Caco-2 (cell line): ENCODE measurements at regions of chr13 and their contacts with region 1.

Region 1: DNA sequence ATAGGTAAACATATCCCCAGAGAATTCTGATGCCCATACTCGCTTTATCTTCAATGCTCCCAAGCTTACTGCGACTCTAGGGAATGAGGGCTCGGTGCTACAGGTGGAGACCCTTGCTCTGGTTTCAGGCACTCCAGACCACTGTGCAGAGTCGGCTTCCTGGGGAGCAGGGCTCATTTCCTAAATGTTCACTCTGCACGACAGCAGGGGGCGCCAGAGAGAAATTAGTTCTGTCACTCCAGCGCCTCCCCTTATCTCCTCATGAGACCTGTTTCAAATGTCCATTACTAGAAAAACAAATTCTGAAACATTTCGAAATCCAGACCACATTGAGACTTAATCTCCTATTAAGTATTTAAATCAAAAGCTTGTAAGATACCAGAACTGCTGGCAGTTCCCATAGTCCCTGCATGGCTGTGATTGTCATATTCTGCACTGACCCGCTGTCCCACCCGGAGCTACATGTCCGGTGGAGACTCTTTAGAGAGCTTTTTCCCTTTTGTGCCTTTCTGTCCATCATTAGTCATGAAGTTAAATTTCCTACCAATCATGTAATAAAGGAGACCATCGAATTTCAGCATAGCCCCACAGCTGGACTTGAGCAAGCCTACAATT is 22.4 kb downstream of the EPSTI1 start:
- DNase-seq: peak; percentile 83 to 91
- H3K4me3 ChIP-seq: no peak overlapping the region
- H3K4me3 Mint-ChIP-seq: peak overlapping the region; percentile 4
- H3K27ac Mint-ChIP-seq: peak overlapping the region; percentile 34
- H3K4me1 ChIP-seq: peaks cover 77% of the 10 kb centered on the region
- H3K4me1 Mint-ChIP-seq: peaks cover 49% of the 10 kb centered on the region
- H3K27me3 ChIP-seq: no peaks in the 10 kb centered on the region
- H3K27me3 Mint-ChIP-seq: no peaks in the 10 kb centered on the region
- CTCF ChIP-seq: peak; percentile 82 to 94

Region 2: DNA sequence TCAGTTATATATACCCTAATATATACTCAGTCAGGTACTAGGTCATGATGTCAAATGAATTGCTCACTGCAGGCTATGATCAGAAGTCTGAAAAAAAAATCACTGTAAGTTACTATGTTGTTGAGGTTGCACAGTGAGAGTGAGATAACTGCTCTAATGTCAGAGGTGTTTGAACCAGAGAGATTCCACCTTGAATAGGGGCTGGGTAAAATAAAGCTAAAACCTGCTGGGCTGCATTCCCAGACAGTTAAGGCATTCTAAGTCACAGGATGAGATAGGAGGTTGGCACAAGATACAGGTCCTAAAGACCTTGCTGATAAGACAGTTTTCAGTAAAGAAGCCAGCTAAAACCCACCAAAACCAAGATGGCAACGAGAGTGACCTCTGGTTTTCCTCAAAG is 12.2 kb after region 1 on chr13:
- CTCF ChIA-PET with region 1: interaction called, 4 read pairs
- POLR2A ChIA-PET with region 1: interaction called, 3 read pairs
- intact Hi-C with region 1: loop called (anchors 2 kb)
- DNase-seq: peak; percentile 82
- H3K4me3 ChIP-seq: no peak overlapping the region
- H3K4me3 Mint-ChIP-seq: peak overlapping the region; percentile 34
- H3K27ac Mint-ChIP-seq: peak overlapping the region; percentile 95
- H3K4me1 ChIP-seq: peaks cover 67% of the 10 kb centered on the region
- H3K4me1 Mint-ChIP-seq: peaks cover 72% of the 10 kb centered on the region
- H3K27me3 ChIP-seq: no peaks in the 10 kb centered on the region
- H3K27me3 Mint-ChIP-seq: no peaks in the 10 kb centered on the region
- CTCF ChIP-seq: no peak

Region 3: DNA sequence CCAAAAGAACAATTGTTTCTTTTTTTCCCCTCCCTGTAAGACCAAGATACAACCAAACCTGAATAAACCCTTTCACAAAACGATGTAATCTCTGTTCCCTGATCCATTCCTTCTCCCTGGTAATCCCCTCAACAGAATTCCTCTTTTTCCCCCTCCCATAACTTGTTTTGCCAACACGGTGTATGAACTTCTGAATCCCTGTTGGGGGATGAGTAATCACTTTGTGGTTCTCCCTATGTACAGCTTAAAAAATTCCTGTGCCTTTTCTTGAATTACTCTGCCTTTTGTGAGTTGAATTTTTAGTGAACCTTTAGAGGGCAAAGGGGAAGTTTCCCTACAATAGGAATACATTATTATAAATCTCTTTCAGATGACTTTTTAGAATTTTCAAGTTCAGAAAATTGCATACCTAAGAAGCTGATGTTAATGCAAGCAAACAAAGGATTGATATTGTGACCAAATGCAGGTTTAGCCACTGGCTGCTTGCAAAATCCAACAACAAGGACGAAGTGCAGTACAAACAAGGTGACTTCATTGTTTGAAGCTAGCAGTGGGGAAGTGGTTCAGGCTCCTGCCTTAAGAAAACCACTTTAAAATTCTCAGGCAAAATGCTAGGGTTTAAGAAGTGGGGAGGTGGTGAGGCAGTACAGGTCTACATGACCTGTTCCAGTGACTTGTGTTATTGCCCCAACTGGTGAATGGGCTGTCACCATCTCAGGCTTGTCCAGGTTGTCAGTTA is 37.4 kb after region 1 on chr13:
- CTCF ChIA-PET with region 1: no interaction called
- POLR2A ChIA-PET with region 1: interaction called, 3 read pairs
- intact Hi-C with region 1: loop called (anchors 5 kb)
- DNase-seq: no peak
- H3K4me3 ChIP-seq: no peak overlapping the region
- H3K4me3 Mint-ChIP-seq: peak overlapping the region; percentile 15
- H3K27ac Mint-ChIP-seq: peak overlapping the region; percentile 85
- H3K4me1 ChIP-seq: peaks cover 49% of the 10 kb centered on the region
- H3K4me1 Mint-ChIP-seq: peaks cover 60% of the 10 kb centered on the region
- H3K27me3 ChIP-seq: no peaks in the 10 kb centered on the region
- H3K27me3 Mint-ChIP-seq: no peaks in the 10 kb centered on the region
- CTCF ChIP-seq: no peak

Region 4: DNA sequence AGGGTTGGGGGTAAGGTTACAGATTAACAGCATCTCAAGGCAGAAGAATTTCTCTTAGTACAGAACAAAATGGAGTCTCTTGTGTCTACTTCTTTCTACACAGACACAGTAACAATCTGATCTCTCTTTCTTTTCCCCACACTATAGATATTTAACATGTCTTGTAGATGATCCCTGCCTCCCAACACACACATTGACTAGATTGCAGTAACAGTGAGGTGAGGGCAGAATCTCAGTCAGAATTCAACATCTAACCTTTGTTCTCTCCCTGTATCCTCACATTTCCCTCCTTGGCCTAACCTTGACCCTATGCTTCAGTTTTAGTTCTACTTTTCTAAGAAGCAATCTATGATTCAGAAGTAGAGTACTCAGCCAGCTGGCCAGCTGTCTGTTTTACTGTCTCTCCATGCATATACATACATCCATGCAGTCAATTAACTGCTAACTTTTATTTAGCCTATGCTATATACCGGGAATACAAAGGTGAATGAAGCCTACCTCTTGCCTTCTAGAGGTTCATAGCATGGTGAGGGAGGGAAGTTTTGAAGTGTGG is 71.8 kb after region 1 on chr13:
- CTCF ChIA-PET with region 1: no interaction called
- POLR2A ChIA-PET with region 1: no interaction called
- intact Hi-C with region 1: loop called (anchors 5 kb)
- DNase-seq: no peak
- H3K4me3 ChIP-seq: no peak overlapping the region
- H3K4me3 Mint-ChIP-seq: peak overlapping the region; percentile 68
- H3K27ac Mint-ChIP-seq: peak overlapping the region; percentile 78
- H3K4me1 ChIP-seq: peaks cover 85% of the 10 kb centered on the region
- H3K4me1 Mint-ChIP-seq: peaks cover 74% of the 10 kb centered on the region
- H3K27me3 ChIP-seq: no peaks in the 10 kb centered on the region
- H3K27me3 Mint-ChIP-seq: no peaks in the 10 kb centered on the region
- CTCF ChIP-seq: no peak

Region 5: GRCh38 chr13:43074824-43075510 is 105.3 kb after region 1 on chr13:
- CTCF ChIA-PET with region 1: no interaction called
- POLR2A ChIA-PET with region 1: interaction called, 4 read pairs
- intact Hi-C with region 1: loop called (anchors 5 kb)
- DNase-seq: no peak
- H3K4me3 ChIP-seq: no peak overlapping the region
- H3K4me3 Mint-ChIP-seq: no peak overlapping the region
- H3K27ac Mint-ChIP-seq: no peak overlapping the region
- H3K4me1 ChIP-seq: peaks cover 31% of the 10 kb centered on the region
- H3K4me1 Mint-ChIP-seq: peaks cover 43% of the 10 kb centered on the region
- H3K27me3 ChIP-seq: no peaks in the 10 kb centered on the region
- H3K27me3 Mint-ChIP-seq: no peaks in the 10 kb centered on the region
- CTCF ChIP-seq: no peak

Region 6: GRCh38 chr13:43119206-43119605 is 149.5 kb after region 1 on chr13:
- CTCF ChIA-PET with region 1: no interaction called
- POLR2A ChIA-PET with region 1: no interaction called
- intact Hi-C with region 1: no loop called
- DNase-seq: no peak
- H3K4me3 ChIP-seq: no peak overlapping the region
- H3K4me3 Mint-ChIP-seq: no peak overlapping the region
- H3K27ac Mint-ChIP-seq: no peak overlapping the region
- H3K4me1 ChIP-seq: peaks cover 3% of the 10 kb centered on the region
- H3K4me1 Mint-ChIP-seq: peaks cover 12% of the 10 kb centered on the region
- H3K27me3 ChIP-seq: no peaks in the 10 kb centered on the region
- H3K27me3 Mint-ChIP-seq: no peaks in the 10 kb centered on the region
- CTCF ChIP-seq: no peak

Region 7: DNA sequence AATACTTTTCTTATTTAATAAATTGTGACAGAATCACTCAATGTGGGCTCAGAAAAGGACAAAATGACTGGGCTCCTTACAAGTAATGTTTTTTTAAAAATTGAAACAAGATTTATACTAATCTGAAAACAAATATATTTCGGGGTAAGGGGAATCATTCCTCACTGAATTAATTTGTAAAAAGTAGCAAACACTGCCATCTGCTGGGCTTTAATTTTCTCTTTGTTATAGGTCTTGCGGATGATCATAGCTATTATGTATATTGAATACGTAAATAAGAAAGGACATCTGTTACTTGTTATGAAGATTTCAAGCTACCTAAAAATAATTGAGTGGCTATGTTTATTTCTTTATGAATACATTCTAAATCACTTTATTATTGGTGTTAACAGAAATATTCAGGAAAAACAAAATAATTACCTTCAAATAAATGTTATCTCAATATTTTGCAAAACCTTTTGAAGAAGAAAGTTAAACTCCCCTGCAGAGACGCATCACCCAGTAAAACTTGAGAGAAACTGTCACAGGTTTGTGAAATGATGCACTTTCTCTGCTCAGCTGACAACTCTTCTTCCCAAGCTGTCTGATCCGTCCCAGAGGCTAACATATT is 834.9 kb after region 1 on chr13:
- CTCF ChIA-PET with region 1: interaction called, 5 read pairs
- POLR2A ChIA-PET with region 1: no interaction called
- intact Hi-C with region 1: loop called (anchors 2 kb)
- DNase-seq: peak in 1 of 2 experiments; percentile 72
- H3K4me3 ChIP-seq: no peak overlapping the region
- H3K4me3 Mint-ChIP-seq: no peak overlapping the region
- H3K27ac Mint-ChIP-seq: no peak overlapping the region
- H3K4me1 ChIP-seq: peaks cover 25% of the 10 kb centered on the region
- H3K4me1 Mint-ChIP-seq: peaks cover 17% of the 10 kb centered on the region
- H3K27me3 ChIP-seq: no peaks in the 10 kb centered on the region
- H3K27me3 Mint-ChIP-seq: no peaks in the 10 kb centered on the region
- CTCF ChIP-seq: peak; percentile 48 to 67